ENCODE measurements at regions of chr9 and their contacts with region 1.

Region 1: GRCh38 chr9:107484117-107484723 is 5.3 kb downstream of the KLF4 start:
- DNase-seq: no peak
- H3K4me3 ChIP-seq: peak overlapping the region in 15 of 59 donors; percentile 2 to 78 (median 73)
- H3K27ac ChIP-seq: peak overlapping the region in 2 of 59 donors; percentile 12 to 46
- H3K27me3 ChIP-seq: peaks cover 0 to 17% (median 0%) of the 10 kb centered on the region in 45 donors
- CTCF ChIP-seq: peak; percentile 36 to 83 (median 66)

Region 2: GRCh38 chr9:108272349-108272899 is 788.2 kb after region 1 on chr9:
- intact Hi-C with region 1: loop called (anchors 5 kb)
- DNase-seq: peak in 9 of 10 donors; percentile 4 to 59 (median 42)
- H3K4me3 ChIP-seq: peak overlapping the region in 32 of 59 donors; percentile 1 to 43 (median 22)
- H3K27ac ChIP-seq: peak overlapping the region in 9 of 59 donors; percentile 6 to 49 (median 25)
- H3K27me3 ChIP-seq: no peaks in the 10 kb centered on the region
- CTCF ChIP-seq: peak; percentile 35 to 83 (median 66)